CD8-positive, alpha-beta memory T cell (primary cell): ENCODE measurements at regions of chr2 and their contacts with region 1.

Region 1: GRCh38 chr2:157644776-157645175 is 16.1 kb upstream of the ACVR1C start:
- DNase-seq: no peak
- H3K4me3 ChIP-seq: no peak overlapping the region
- H3K4me3 Mint-ChIP-seq: no peak overlapping the region
- H3K27ac ChIP-seq: no peak overlapping the region
- H3K27ac Mint-ChIP-seq: no peak overlapping the region
- H3K4me1 ChIP-seq: no peaks in the 10 kb centered on the region
- H3K4me1 Mint-ChIP-seq: no peaks in the 10 kb centered on the region
- H3K27me3 ChIP-seq: no peaks in the 10 kb centered on the region
- H3K27me3 Mint-ChIP-seq: peaks cover 5 to 14% of the 10 kb centered on the region in 2 donors

Region 2: DNA sequence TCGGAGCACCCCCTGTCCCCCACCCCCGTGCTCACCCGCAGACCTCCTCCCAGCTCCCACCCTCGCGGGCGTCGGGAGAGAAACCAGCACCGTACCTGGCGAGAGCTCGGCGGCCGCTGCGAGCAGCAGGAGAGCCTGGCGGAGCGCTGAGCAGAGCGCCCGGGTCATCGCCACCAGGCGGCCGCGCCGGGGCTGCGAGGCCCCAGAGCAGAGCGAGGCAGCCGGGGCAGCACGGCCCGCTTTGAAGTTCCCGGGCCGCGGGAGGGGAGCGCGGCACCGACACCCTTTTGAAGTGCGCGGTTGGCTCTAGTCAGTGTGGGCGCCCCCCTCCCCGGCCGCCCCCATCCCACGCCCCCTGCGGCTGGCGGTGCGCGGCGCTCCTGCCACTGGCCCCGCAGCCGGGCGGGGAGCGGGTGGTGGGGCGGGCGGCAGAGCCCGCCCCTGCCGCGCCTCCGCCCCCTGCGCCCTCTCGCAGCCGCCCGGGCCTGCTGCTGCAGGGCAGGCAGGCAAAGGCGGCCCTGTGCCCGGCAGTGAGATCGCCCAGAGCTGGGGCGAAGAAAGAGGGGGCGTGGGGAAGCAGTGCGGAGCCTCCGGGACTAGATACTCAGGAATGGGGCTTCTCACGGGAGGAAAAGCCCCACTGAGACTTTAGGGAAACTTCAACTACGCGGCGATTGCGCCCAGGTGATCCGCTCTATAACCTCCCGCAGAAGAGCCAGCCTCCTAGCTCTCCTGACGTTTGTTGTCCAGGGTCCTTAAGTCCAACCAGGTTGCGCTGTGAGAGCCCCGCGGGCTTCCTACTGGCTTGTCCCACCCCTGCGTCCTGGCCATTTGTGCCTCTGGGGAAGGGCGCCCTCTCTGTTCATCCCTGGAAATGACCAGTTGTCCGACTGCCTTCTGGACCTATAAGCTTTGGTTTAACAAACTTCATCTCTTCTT is 16.0 kb before region 1 on chr2 and contains the start of gene ACVR1C:
- CTCF ChIA-PET with region 1: interaction called, 10 read pairs
- POLR2A ChIA-PET with region 1: interaction called, 13 read pairs
- DNase-seq: peak; percentile 60 to 78 (median 70)
- H3K4me3 ChIP-seq: peak within 1 kb of the TSS; percentile 77
- H3K4me3 Mint-ChIP-seq: peak within 1 kb of the TSS; percentile 88 to 97 (median 94)
- H3K27ac ChIP-seq: peak within 1 kb of the TSS; percentile 34
- H3K27ac Mint-ChIP-seq: peak within 1 kb of the TSS; percentile 58 to 94 (median 82)
- H3K4me1 ChIP-seq: peaks cover 18% of the 10 kb centered on the region
- H3K4me1 Mint-ChIP-seq: peaks cover 32 to 45% (median 34%) of the 10 kb centered on the region in 3 donors
- H3K27me3 ChIP-seq: no peaks in the 10 kb centered on the region
- H3K27me3 Mint-ChIP-seq: peaks cover 2 to 4% of the 10 kb centered on the region in 2 donors
- total RNA-seq, gene ACVR1C: 0.61 to 0.66 TPM

Region 3: DNA sequence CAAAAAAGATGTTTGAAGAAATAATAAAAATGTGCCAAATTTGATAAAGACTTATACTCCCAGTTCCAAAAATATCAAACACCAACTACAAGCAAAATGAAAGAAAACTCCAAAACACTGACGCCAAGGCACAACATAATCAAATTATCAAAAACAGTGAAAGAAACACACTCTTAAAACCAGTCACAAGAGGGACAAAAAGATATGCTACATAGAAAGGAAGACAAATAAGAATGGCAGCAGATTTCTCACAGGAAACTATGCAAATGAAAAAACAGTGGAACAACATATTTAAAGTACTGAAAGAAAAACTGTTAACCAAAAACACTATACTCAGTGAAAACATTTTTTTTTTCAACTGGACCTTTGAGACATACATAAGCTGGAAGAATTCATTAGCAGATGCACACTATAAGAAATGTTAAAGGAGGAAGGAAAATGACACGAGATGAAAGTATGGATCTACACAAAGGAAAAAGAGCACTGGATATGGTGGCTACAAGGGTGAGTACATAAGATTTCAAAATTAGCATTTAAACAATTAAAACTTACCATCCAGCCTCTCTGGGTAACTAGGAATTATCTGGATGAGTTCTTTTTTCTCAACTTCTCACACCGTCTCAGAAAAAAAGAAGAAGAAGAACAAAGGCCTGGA is 77.9 kb after region 1 on chr2:
- CTCF ChIA-PET with region 1: no interaction called
- POLR2A ChIA-PET with region 1: no interaction called
- DNase-seq: no peak
- H3K4me3 ChIP-seq: no peak overlapping the region
- H3K4me3 Mint-ChIP-seq: no peak overlapping the region
- H3K27ac ChIP-seq: no peak overlapping the region
- H3K27ac Mint-ChIP-seq: no peak overlapping the region
- H3K4me1 ChIP-seq: no peaks in the 10 kb centered on the region
- H3K4me1 Mint-ChIP-seq: no peaks in the 10 kb centered on the region
- H3K27me3 ChIP-seq: no peaks in the 10 kb centered on the region
- H3K27me3 Mint-ChIP-seq: no peaks in the 10 kb centered on the region